ENCODE measurements at regions of chr5 and their contacts with region 1.

Region 1: GRCh38 chr5:21452449-21452848 is 1400.7 kb downstream of the CDH12 start:
- DNase-seq: no peak

Region 2: DNA sequence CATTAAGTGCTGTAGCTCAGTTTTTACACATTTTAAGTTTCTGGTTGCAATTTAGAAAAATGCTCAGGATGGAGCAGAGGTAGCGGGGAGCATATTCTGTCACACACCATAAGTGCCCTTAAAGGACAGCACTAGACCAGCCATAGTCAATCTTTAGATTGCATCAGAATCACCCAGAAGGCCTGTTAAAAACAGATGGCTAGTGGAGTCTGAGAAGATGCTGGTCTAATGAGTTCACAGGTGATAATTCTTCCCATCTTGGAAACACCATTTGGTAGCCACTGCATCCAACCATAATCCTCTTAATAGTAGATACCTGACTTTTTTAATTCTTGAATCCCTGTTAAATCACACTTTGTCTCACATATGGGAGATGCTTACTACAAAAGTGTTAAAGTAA is 1577.6 kb before region 1 on chr5:
- intact Hi-C with region 1: loop called in 1 of 2 experiments (anchors 10 kb)
- DNase-seq: no peak

Measured in posterior vena cava (tissue), 2 donors.